GM12878 (cell line): ENCODE measurements at regions of chr13 and their contacts with region 1.

Region 1: GRCh38 chr13:75372517-75372916 is 109.5 kb downstream of the TBC1D4 start:
- DNase-seq: no peak
- ATAC-seq: peak; percentile 87
- H3K4me3 ChIP-seq: no peak overlapping the region
- H3K27ac ChIP-seq: no peak overlapping the region
- H3K4me1 ChIP-seq: no peaks in the 10 kb centered on the region; the same call in 1 of the 2 replicates
- H3K27me3 ChIP-seq: no peaks in the 10 kb centered on the region
- CTCF ChIP-seq: peak; percentile 59 to 64 (median 61); a peak in 5 of 6 replicates
- EP300 ChIP-seq: no peak
- POLR2A ChIP-seq: no peak
- RAD21 ChIP-seq: peak; percentile 78

Region 2: DNA sequence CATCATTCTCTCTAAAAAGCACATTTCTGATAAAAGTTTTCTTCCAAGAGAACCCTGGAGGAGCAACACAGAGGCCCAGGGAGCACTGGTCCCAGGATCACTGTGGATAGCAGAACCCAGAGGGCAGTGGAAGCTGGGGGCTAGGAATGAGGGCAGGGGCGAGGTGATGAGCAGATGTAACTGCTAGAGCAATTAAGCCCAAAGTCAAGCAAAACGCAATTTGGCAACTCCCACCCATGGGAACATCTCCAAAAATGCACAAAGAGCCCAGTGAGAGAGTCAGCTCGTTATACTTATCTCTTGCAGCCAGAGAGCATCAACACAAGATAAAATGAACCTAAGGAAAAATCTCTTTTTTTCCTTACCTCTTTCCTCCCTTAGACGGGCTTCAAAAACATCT is 174.7 kb before region 1 on chr13:
- CTCF ChIA-PET with region 1: no interaction called
- POLR2A ChIA-PET with region 1: no interaction called
- RAD21 ChIA-PET with region 1: no interaction called
- SMC1A ChIA-PET with region 1: no interaction called
- in situ Hi-C with region 1: no loop called
- intact Hi-C with region 1: no loop called
- DNase-seq: no peak
- ATAC-seq: no peak
- H3K4me3 ChIP-seq: no peak overlapping the region
- H3K27ac ChIP-seq: no peak overlapping the region
- H3K4me1 ChIP-seq: no peaks in the 10 kb centered on the region
- H3K27me3 ChIP-seq: no peaks in the 10 kb centered on the region
- CTCF ChIP-seq: no peak
- EP300 ChIP-seq: no peak
- POLR2A ChIP-seq: no peak
- RAD21 ChIP-seq: no peak

Region 3: DNA sequence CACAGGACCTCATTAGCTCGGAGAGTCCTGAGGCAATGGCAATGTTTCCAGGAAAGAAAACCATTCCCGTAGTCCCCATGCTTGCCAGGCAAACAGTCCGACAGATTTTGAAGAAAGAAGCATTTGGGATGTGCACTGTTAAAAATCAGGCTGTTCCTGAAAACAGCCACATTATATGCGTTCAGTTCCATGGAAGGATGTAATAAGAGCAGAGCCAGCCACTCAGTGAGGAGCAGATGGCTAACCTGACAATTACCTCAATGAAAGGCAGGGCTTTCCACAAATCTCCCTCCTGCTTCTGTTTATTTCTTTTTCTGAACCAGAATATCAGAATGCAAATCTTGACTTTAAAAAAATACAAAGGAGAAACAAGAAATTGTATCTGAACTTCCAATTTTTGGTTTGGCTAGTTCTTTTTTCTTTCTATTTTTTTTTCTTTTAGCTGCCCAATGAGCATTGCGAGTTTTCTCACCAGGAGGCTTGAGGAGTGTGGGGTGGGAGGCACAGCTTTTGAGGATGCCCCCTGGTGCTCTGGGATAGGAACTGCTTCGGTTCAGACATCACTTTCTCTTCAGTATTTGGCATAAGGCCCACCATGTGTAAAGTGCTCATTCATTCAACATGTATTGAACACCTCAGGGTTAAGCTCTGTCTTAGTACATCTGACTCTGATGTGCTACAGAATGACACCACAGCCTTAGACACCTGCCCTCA is 14.8 kb before region 1 on chr13:
- CTCF ChIA-PET with region 1: interaction called, 20 read pairs
- POLR2A ChIA-PET with region 1: interaction called, 4 read pairs
- RAD21 ChIA-PET with region 1: interaction called, 3 read pairs
- SMC1A ChIA-PET with region 1: interaction called, 13 read pairs
- in situ Hi-C with region 1: no loop called
- intact Hi-C with region 1: no loop called
- DNase-seq: no peak
- ATAC-seq: peak; percentile 95
- H3K4me3 ChIP-seq: no peak overlapping the region
- H3K27ac ChIP-seq: no peak overlapping the region
- H3K4me1 ChIP-seq: no peaks in the 10 kb centered on the region
- H3K27me3 ChIP-seq: no peaks in the 10 kb centered on the region
- CTCF ChIP-seq: peak; percentile 64 to 83 (median 75)
- EP300 ChIP-seq: no peak
- POLR2A ChIP-seq: no peak
- RAD21 ChIP-seq: peak; percentile 66

Region 4: DNA sequence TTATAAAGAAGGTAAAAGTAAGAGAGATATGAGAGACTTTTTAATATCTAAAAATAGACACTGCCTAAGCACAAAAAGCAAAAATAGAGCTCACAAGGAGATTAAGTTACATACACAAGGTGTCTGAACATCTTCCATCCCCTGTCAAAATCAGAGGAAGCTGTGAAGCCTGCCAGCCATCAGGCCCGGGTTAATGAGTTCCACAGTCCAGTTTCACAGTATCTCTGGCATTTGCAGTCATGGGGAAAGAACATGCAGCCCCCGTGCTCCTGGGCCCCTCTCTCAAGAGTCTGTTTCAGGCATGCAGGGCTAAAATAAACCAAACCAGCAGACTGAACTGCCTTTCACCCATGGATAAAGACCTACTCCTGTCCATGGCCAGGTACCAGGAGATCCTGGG is 30.3 kb after region 1 on chr13:
- CTCF ChIA-PET with region 1: interaction called, 31 read pairs
- POLR2A ChIA-PET with region 1: no interaction called
- RAD21 ChIA-PET with region 1: interaction called, 8 read pairs
- SMC1A ChIA-PET with region 1: interaction called, 28 read pairs
- in situ Hi-C with region 1: no loop called
- intact Hi-C with region 1: no loop called
- DNase-seq: no peak
- ATAC-seq: no peak
- H3K4me3 ChIP-seq: no peak overlapping the region
- H3K27ac ChIP-seq: no peak overlapping the region
- H3K4me1 ChIP-seq: no peaks in the 10 kb centered on the region
- H3K27me3 ChIP-seq: no peaks in the 10 kb centered on the region
- CTCF ChIP-seq: no peak
- EP300 ChIP-seq: no peak
- POLR2A ChIP-seq: no peak
- RAD21 ChIP-seq: no peak

Region 5: GRCh38 chr13:75432045-75432444 is 59.5 kb after region 1 on chr13:
- CTCF ChIA-PET with region 1: interaction called, 17 read pairs
- POLR2A ChIA-PET with region 1: no interaction called
- RAD21 ChIA-PET with region 1: no interaction called
- SMC1A ChIA-PET with region 1: interaction called, 11 read pairs
- in situ Hi-C with region 1: no loop called
- intact Hi-C with region 1: no loop called
- DNase-seq: no peak
- ATAC-seq: peak; percentile 40; the same call in 2 of the 3 replicates
- H3K4me3 ChIP-seq: no peak overlapping the region
- H3K27ac ChIP-seq: no peak overlapping the region
- H3K4me1 ChIP-seq: no peaks in the 10 kb centered on the region
- H3K27me3 ChIP-seq: no peaks in the 10 kb centered on the region
- CTCF ChIP-seq: peak in 1 of 3 experiments; percentile 27; a peak in 1 of 6 replicates
- EP300 ChIP-seq: no peak
- POLR2A ChIP-seq: no peak
- RAD21 ChIP-seq: peak; percentile 50; the same call in 1 of the 2 replicates

Region 6: GRCh38 chr13:75482070-75482819 is 109.7 kb after region 1 on chr13 and contains the start of gene TBC1D4:
- CTCF ChIA-PET with region 1: interaction called, 47 read pairs
- POLR2A ChIA-PET with region 1: interaction called, 6 read pairs
- RAD21 ChIA-PET with region 1: interaction called, 46 read pairs
- SMC1A ChIA-PET with region 1: interaction called, 75 read pairs
- in situ Hi-C with region 1: loop called (anchors 5 kb)
- intact Hi-C with region 1: loop called (anchors 2 kb)
- DNase-seq: peak; percentile 66
- ATAC-seq: peak; percentile 86
- H3K4me3 ChIP-seq: peak within 1 kb of the TSS; percentile 82
- H3K27ac ChIP-seq: peak within 1 kb of the TSS; percentile 55
- H3K4me1 ChIP-seq: peaks cover 8% of the 10 kb centered on the region
- H3K27me3 ChIP-seq: no peaks in the 10 kb centered on the region
- CTCF ChIP-seq: peak; percentile 81 to 88 (median 86)
- EP300 ChIP-seq: peak in 1 of 2 experiments; percentile 84; a peak in 2 of 4 replicates
- POLR2A ChIP-seq: peak; percentile 73
- RAD21 ChIP-seq: peak; percentile 82
- polyA plus RNA-seq, gene TBC1D4: 11.0 to 11.9 TPM

Region 7: GRCh38 chr13:75549262-75550158 is 177.0 kb after region 1 on chr13 and contains the start of gene UCHL3:
- CTCF ChIA-PET with region 1: interaction called, 23 read pairs
- POLR2A ChIA-PET with region 1: interaction called, 3 read pairs
- RAD21 ChIA-PET with region 1: interaction called, 20 read pairs
- SMC1A ChIA-PET with region 1: interaction called, 13 read pairs
- in situ Hi-C with region 1: loop called (anchors 5 kb)
- intact Hi-C with region 1: loop called (anchors 1 kb)
- DNase-seq: peak; percentile 89
- ATAC-seq: peak; percentile 97
- H3K4me3 ChIP-seq: peak within 1 kb of the TSS; percentile 86
- H3K27ac ChIP-seq: peak within 1 kb of the TSS; percentile 82
- H3K4me1 ChIP-seq: peaks cover 9% of the 10 kb centered on the region
- H3K27me3 ChIP-seq: no peaks in the 10 kb centered on the region
- CTCF ChIP-seq: peak; percentile 95 to 99 (median 96); a peak in 5 of 6 replicates
- EP300 ChIP-seq: 0 out of 4 replicates have a peak, but pooled peaks of 1 of the 2 experiments have one; percentile 35
- POLR2A ChIP-seq: peak; percentile 97
- RAD21 ChIP-seq: peak; percentile 88
- polyA plus RNA-seq, gene UCHL3: 163 to 166 TPM

Region 8: DNA sequence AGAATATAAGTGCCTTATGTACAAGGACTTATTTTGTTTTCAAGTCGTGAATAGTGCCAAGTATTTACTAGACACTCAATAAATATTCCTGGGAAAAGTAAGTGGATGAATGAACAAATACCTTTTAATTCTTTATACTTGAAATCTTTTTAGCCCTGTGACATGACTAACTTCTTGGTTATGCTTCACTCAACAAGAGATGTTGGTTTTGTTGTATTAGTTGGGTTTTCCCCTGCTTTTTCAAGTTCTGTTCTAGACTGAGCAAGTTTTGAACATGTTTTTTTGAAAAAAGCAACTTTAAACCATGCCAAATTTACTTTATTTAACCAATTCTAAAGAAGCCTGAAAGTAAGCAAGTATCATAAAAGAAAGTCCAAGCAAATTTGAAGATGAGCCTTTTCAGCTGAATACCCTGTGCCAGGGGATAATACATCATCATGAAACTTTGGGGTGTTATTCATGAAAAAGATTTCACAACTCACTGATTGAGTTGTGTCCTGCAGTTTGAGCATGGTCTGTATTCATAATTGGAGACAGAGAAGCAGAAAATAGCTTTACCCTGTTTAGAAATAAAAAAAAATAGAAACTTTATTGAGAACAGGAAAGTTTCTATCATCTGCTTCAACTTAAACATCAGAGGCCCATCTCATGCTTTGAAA is 274.7 kb after region 1 on chr13:
- CTCF ChIA-PET with region 1: no interaction called
- POLR2A ChIA-PET with region 1: no interaction called
- RAD21 ChIA-PET with region 1: no interaction called
- SMC1A ChIA-PET with region 1: no interaction called
- in situ Hi-C with region 1: no loop called
- intact Hi-C with region 1: loop called (anchors 10 kb)
- DNase-seq: peak; percentile 38
- ATAC-seq: peak; percentile 92
- H3K4me3 ChIP-seq: peak overlapping the region; percentile 39; the same call in 1 of the 2 replicates
- H3K27ac ChIP-seq: peak overlapping the region; percentile 76
- H3K4me1 ChIP-seq: peaks cover 24% of the 10 kb centered on the region
- H3K27me3 ChIP-seq: no peaks in the 10 kb centered on the region
- CTCF ChIP-seq: no peak
- EP300 ChIP-seq: peak in 1 of 2 experiments; percentile 66; a peak in 2 of 4 replicates
- POLR2A ChIP-seq: no peak
- RAD21 ChIP-seq: no peak